Panc1 (cell line): ENCODE measurements at regions of chr12 and their contacts with region 1.

Region 1: GRCh38 chr12:84480803-84481202 is 431.8 kb downstream of the SLC6A15 start:
- DNase-seq: no peak
- ATAC-seq: no peak
- H3K4me3 ChIP-seq: no peak overlapping the region
- H3K27ac ChIP-seq: no peak overlapping the region
- H3K4me1 ChIP-seq: no peaks in the 10 kb centered on the region
- H3K27me3 ChIP-seq: no peaks in the 10 kb centered on the region
- CTCF ChIP-seq: no peak

Region 2: GRCh38 chr12:83468988-83469908 is 1011.6 kb before region 1 on chr12:
- CTCF ChIA-PET with region 1: no interaction called
- POLR2A ChIA-PET with region 1: no interaction called
- in situ Hi-C with region 1: no loop called
- intact Hi-C with region 1: loop called (anchors 5 kb)
- DNase-seq: no peak
- ATAC-seq: no peak
- H3K4me3 ChIP-seq: no peak overlapping the region
- H3K27ac ChIP-seq: no peak overlapping the region
- H3K4me1 ChIP-seq: no peaks in the 10 kb centered on the region
- H3K27me3 ChIP-seq: no peaks in the 10 kb centered on the region
- CTCF ChIP-seq: no peak

Region 3: DNA sequence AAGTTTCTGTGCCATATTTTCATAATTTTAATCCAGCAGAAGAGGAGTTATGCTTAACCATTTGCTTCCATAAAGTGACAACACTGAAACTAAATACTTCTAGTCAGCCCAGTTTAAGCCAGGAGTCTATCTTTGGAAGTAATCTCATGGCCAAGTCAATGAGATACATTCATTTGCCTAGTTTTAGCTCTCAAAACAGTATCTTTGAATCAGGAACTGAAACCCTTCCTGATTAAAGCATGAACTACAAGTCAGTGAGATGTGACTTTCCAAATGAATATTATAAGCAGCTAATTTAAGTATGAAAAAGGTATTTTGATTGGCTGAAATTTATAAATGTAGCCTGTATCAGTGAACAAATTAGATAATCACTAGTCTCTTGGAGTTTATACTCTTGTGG is 59.7 kb before region 1 on chr12:
- CTCF ChIA-PET with region 1: no interaction called
- POLR2A ChIA-PET with region 1: no interaction called
- in situ Hi-C with region 1: no loop called
- intact Hi-C with region 1: no loop called
- DNase-seq: no peak
- ATAC-seq: no peak
- H3K4me3 ChIP-seq: no peak overlapping the region
- H3K27ac ChIP-seq: no peak overlapping the region
- H3K4me1 ChIP-seq: no peaks in the 10 kb centered on the region
- H3K27me3 ChIP-seq: no peaks in the 10 kb centered on the region
- CTCF ChIP-seq: no peak